Sciatic nerve (tissue), 2 donors: ENCODE measurements at regions of chr17 and their contacts with region 1.

Region 1: GRCh38 chr17:74457146-74457819 is 9.2 kb upstream of the CD300A start:
- DNase-seq: peak; percentile 90
- ATAC-seq: peak; percentile 33

Region 2: GRCh38 chr17:73210002-73210678 is 1247.1 kb before region 1 on chr17:
- intact Hi-C with region 1: no loop called
- DNase-seq: no peak
- ATAC-seq: no peak

Region 3: DNA sequence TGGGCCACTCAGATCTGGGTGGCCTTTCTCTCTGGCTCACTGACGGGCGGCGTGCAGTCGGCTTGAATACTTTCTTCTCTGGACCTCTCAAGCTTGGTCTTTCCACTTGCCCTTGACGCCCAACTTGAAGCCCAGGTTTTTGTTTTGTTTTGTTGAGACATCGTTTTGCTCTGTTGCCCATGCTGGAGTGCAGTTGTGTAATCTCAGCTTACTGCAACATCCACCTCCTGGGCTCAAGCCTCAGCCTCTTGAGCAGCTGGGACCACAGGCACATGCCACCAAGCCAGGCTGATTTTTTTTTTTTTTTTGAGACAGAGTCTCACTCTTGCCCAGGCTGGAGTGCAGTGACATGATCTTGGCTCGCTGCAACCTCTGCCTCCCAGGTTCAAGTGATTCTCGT is 154.0 kb before region 1 on chr17:
- intact Hi-C with region 1: loop called (anchors 5 kb)
- DNase-seq: no peak
- ATAC-seq: no peak

Region 4: DNA sequence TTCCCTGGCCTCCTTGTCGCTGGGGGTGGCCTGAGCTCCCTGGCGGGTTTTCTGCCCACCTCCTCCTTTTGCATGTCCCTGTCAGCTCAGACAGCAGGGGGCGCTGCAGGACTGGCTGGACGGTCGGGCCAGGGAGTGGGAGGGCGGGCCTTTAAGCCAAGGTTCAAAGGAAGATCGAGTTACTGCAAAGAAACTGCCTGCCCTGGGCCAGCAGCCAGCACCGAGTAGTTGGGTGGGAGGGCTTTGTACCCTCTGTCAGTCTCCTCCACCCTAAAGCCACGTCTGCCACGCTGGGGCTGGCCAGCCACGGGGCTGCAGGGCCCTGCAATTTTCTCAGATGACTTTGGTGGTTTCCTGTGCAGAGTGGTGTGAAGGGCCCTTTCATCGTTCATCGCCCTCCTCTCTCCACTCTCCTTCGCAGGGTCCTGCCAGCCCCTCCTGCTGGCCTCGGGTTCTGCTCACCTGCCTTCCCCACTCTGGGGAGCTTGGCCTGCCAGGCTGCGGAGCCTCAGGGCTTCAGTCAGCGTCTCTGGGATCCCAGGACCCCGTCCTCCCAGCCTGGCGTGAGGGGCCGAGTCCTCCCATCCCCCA is 77.7 kb before region 1 on chr17:
- intact Hi-C with region 1: loop called (anchors 5 kb)
- DNase-seq: peak; percentile 97
- ATAC-seq: peak; percentile 96